ENCODE measurements at regions of chr2 and their contacts with region 1.

Region 1: DNA sequence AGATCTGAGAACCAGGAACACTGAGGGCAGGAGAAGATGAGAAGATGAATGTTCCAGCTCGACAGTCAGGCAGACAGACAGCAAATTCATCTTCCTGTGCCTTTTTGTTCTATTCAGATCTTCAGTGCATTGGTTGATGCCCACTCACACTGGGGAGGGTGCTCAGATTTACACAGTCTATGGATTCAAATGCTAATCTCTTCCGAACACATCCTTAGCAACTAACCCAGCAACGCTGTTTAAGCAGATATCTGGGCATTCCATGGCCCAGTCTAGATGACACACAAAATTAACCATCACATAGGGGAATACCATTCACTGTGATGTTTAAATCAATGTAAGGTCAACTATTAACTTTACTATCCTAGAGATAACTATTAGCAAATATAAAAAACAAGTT is 571.9 kb downstream of the NYAP2 start:
- DNase-seq: no peak
- H3K4me3 ChIP-seq: no peak overlapping the region
- H3K27ac ChIP-seq: no peak overlapping the region
- H3K4me1 ChIP-seq: no peaks in the 10 kb centered on the region
- H3K27me3 ChIP-seq: no peaks in the 10 kb centered on the region
- CTCF ChIP-seq: no peak
- POLR2A ChIP-seq: no peak

Region 2: GRCh38 chr2:224691563-224691962 is 1279.9 kb before region 1 on chr2:
- intact Hi-C with region 1: loop called (anchors 10 kb)
- DNase-seq: no peak
- H3K4me3 ChIP-seq: no peak overlapping the region
- H3K27ac ChIP-seq: no peak overlapping the region
- H3K4me1 ChIP-seq: no peaks in the 10 kb centered on the region
- H3K27me3 ChIP-seq: no peaks in the 10 kb centered on the region
- CTCF ChIP-seq: no peak
- POLR2A ChIP-seq: no peak

Measured in vagina (tissue), 2 donors.